Left cardiac atrium (tissue), 4 donors: ENCODE measurements at regions of chr12 and their contacts with region 1.

Region 1: GRCh38 chr12:47715393-47715876 is 9.6 kb upstream of the RPAP3 start:
- DNase-seq: peak; percentile 84
- ATAC-seq: peak; percentile 59 to 67

Region 2: DNA sequence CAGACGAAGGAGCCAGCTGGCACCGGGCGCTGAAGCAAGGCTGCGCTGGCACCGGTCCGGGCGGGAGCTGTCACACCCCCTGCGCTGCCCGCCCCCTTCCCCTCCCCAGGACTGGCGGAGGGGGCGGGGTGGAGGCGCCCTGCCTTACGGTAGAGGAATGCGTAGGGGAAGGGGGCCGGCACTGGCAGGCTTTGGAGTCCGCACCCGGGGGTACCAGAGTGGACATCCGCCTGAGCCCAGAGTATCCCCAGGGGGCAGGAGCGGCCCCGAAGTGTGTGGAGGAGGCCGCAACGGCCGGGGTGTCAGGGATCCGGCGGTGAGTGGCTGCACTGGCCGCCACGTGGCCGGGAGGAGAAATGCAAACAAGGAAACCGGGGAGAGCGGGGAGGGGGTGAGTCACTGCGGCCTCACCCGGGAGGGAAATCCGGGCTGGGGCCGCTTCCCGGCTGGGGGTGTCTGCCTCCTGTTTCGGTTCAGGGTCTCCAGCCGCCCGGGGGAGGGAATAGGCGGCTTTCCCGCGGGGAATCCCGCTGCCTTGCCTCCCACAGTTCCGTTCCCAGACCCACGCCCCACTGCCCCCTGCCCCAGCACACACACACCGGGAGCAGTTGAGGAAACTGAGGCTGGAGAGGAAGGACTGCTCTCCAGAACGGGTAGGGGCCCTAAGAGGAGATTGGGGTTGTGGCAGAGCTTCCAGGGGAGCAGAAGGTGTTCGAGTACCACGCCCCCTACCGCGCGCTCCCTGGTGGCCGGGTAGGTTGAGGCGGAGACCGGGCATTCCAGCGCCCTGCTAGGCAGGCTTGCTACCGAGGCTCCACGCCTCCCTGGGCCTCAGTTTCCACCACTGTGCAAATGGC is 43.6 kb after region 1 on chr12 and contains the start of gene RAPGEF3:
- intact Hi-C with region 1: loop called in 1 of 2 experiments (anchors 2 kb)
- DNase-seq: peak; percentile 89
- ATAC-seq: peak; percentile 89 to 90
- total RNA-seq, gene RAPGEF3: 27.3 to 35.9 TPM

Region 3: DNA sequence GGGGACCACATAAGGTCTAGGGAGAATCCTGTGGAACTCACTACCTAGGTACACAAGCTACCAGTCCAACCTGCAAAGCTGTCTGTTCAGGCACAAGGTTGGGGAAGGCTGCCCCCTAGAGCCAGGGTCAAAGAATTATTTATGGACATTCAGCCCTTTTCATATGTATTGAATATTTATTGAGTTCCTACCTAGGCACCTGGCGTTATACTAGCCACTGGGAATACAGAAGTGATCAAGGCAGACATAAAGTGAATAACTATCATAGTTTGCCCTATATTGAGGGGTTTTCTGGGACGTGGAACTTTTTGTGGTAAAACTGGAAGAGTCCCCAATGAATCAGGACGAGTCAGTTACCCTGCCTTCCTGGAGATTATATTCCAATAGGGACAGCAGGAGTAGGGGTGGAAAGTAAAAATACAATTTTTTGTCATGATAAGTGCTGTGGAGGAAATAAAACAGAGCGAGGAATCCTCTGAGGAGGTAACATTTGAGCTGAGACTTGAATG is 51.8 kb after region 1 on chr12:
- intact Hi-C with region 1: loop called (anchors 2 to 5 kb)
- DNase-seq: no peak
- ATAC-seq: peak in 1 of 2 donors; percentile 8

Region 4: GRCh38 chr12:47779301-47779942 is 64.0 kb after region 1 on chr12:
- intact Hi-C with region 1: loop called in 1 of 2 experiments (anchors 2 kb)
- DNase-seq: peak; percentile 85
- ATAC-seq: peak; percentile 67 to 80

Region 5: GRCh38 chr12:47837190-47838171 is 122.0 kb after region 1 on chr12:
- intact Hi-C with region 1: loop called (anchors 2 to 5 kb)
- DNase-seq: peak; percentile 74
- ATAC-seq: peak; percentile 67 to 73

Region 6: GRCh38 chr12:47963340-47964040 is 248.1 kb after region 1 on chr12 and contains the start of gene TMEM106C:
- intact Hi-C with region 1: loop called in 1 of 2 experiments (anchors 10 kb)
- DNase-seq: peak; percentile 93
- ATAC-seq: peak; percentile 95 to 96
- total RNA-seq, gene TMEM106C: 47.9 to 54.9 TPM